Activated CD4-positive, alpha-beta T cell treated with anti-CD3 and anti-CD28 coated beads for 36 hours (primary cell): ENCODE measurements at regions of chr2 and their contacts with region 1.

Region 1: GRCh38 chr2:9799665-9800632 is 43.3 kb upstream of the TAF1B start:
- DNase-seq: peak; percentile 93
- ATAC-seq: peak; percentile 92
- H3K4me3 Mint-ChIP-seq: peak overlapping the region; percentile 39
- H3K27ac Mint-ChIP-seq: peak overlapping the region; percentile 86
- H3K4me1 Mint-ChIP-seq: peaks cover 24% of the 10 kb centered on the region
- H3K27me3 Mint-ChIP-seq: peaks cover 2% of the 10 kb centered on the region

Region 2: DNA sequence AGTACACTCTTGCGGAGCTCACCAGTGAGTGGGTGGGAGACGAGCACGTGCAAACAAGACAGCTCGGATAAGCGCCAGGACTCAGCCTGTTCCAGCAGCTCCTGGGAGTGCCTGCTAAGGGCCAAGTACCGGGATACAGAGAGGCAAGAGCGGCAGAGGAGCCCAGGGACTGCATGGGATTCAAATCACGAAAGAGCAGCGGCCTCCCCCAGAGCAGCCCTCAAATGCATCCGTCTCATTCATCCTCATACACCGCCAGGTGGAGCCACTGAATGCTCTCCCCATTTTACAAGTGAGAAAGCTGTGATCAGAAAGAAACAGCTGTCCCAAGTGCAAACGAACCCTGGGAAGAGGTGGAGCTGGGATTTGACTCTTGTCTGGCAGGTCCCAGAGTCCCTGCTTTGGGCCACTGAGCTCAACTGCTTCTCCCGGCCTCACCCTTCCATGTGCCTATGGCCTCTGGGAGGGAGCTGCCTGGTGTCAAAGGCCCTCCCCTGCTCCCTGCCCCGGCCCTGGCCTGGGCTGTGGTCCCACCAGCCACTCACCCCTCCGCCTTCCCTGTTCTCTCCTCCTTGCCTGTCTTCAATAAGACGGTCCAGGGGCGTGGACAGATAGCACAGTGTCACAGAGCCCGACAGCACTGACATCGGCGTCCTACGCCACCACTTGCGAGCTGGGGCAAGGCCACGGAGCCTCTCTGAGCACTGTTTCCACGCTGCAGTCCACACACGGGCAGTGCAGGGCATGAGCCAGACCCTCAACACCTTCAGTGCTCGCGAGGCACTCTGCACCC is 29.4 kb before region 1 on chr2:
- CTCF ChIA-PET with region 1: interaction called, 17 read pairs
- POLR2A ChIA-PET with region 1: no interaction called
- intact Hi-C with region 1: no loop called
- DNase-seq: peak; percentile 73
- ATAC-seq: peak; percentile 74
- H3K4me3 Mint-ChIP-seq: no peak overlapping the region
- H3K27ac Mint-ChIP-seq: no peak overlapping the region
- H3K4me1 Mint-ChIP-seq: peaks cover 13% of the 10 kb centered on the region
- H3K27me3 Mint-ChIP-seq: no peaks in the 10 kb centered on the region

Region 3: DNA sequence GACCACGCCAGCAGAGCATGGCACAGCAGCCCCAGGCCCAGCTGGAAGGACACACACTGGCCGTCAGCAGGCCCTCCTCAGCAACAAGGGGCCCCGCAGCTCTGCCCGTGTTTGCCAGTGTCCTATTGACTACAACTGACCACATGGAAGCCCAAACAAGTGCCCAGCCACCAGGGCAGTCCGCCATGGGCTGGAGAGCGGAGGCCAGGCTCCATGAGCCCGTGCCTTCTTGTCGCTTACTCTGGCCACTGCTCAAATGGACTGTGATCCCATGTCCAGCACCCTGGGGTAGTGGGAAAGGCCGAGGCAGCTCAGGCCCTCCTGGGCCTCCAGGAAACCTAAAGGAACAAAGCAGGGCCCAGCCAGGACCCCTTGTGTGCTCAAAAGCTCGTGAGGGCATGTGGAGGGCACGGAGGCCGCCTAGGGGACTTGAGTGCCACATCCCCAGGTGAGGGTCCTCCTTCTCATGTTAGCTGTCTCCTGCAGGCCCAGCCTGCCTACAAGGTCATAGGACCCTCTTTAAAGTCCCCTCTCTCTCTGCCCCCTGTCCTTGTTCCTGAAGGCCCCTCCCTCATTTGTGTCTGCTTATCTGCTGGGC is 10.5 kb before region 1 on chr2:
- CTCF ChIA-PET with region 1: interaction called, 34 read pairs
- POLR2A ChIA-PET with region 1: no interaction called
- intact Hi-C with region 1: no loop called
- DNase-seq: no peak
- ATAC-seq: no peak
- H3K4me3 Mint-ChIP-seq: no peak overlapping the region
- H3K27ac Mint-ChIP-seq: no peak overlapping the region
- H3K4me1 Mint-ChIP-seq: peaks cover 12% of the 10 kb centered on the region
- H3K27me3 Mint-ChIP-seq: no peaks in the 10 kb centered on the region